Lower leg skin (tissue), 4 donors: ENCODE measurements at regions of chr6 and their contacts with region 1.

Region 1: DNA sequence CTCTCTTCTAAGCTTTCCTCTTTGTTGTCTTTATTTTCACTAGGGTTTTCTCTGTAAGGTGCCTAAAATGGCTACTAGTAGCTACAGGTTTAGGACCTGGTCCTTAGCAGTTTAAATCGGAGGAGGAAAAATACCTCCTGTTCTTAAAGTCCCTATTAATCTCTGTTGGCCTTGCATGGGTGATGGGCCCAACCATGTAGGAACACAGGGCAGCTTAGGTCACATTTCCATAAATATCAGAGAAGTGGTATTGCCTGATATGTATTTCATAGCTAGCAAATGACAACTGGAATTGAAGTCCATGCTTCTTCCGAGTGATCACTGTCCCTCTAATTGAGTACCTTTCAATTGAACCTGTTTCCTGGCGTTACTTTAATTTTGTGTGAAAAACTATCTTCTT is 70.0 kb downstream of the LAMA2 start:
- DNase-seq: no peak
- H3K4me3 ChIP-seq: no peak overlapping the region
- CTCF ChIP-seq: no peak
- POLR2A ChIP-seq: no peak

Region 2: GRCh38 chr6:127980996-127981395 is 971.9 kb before region 1 on chr6:
- intact Hi-C with region 1: loop called (anchors 5 kb)
- DNase-seq: no peak
- H3K4me3 ChIP-seq: no peak overlapping the region
- CTCF ChIP-seq: no peak
- POLR2A ChIP-seq: no peak